Endothelial cell of umbilical vein (primary cell): ENCODE measurements at regions of chr4 and their contacts with region 1.

Region 1: GRCh38 chr4:7802093-7802726 is 137.5 kb downstream of the AFAP1 start:
- DNase-seq: peak; percentile 86
- H3K4me3 ChIP-seq: no peak overlapping the region
- H3K27ac ChIP-seq: no peak overlapping the region
- H3K4me1 ChIP-seq: peaks cover 42% of the 10 kb centered on the region
- H3K27me3 ChIP-seq: no peaks in the 10 kb centered on the region
- CTCF ChIP-seq: peak; percentile 86 to 91
- POLR2A ChIP-seq: no peak

Region 2: GRCh38 chr4:7192252-7193029 is 609.8 kb before region 1 on chr4 and contains the start of gene SORCS2:
- CTCF ChIA-PET with region 1: interaction called, 4 read pairs
- POLR2A ChIA-PET with region 1: no interaction called
- dilution Hi-C with region 1: no loop called
- intact Hi-C with region 1: loop called (anchors 5 kb)
- DNase-seq: peak; percentile 25
- H3K4me3 ChIP-seq: no peak within 1 kb of the TSS
- H3K27ac ChIP-seq: no peak within 1 kb of the TSS
- H3K4me1 ChIP-seq: no peaks in the 10 kb centered on the region
- H3K27me3 ChIP-seq: peaks cover 42 to 46% of the 10 kb centered on the region in 2 experiments
- CTCF ChIP-seq: peak; percentile 58 to 59
- POLR2A ChIP-seq: no peak
- total RNA-seq, gene SORCS2: 0.14 TPM in 1 of 2 replicates, not detected in the other

Region 3: GRCh38 chr4:7679406-7680040 is 122.7 kb before region 1 on chr4:
- CTCF ChIA-PET with region 1: no interaction called
- POLR2A ChIA-PET with region 1: no interaction called
- dilution Hi-C with region 1: no loop called
- intact Hi-C with region 1: no loop called
- DNase-seq: no peak
- H3K4me3 ChIP-seq: no peak overlapping the region
- H3K27ac ChIP-seq: no peak overlapping the region
- H3K4me1 ChIP-seq: no peaks in the 10 kb centered on the region
- H3K27me3 ChIP-seq: no peaks in the 10 kb centered on the region
- CTCF ChIP-seq: no peak
- POLR2A ChIP-seq: no peak

Region 4: GRCh38 chr4:7770224-7771050 is 31.8 kb before region 1 on chr4:
- CTCF ChIA-PET with region 1: interaction called, 36 read pairs
- POLR2A ChIA-PET with region 1: no interaction called
- dilution Hi-C with region 1: no loop called
- intact Hi-C with region 1: loop called (anchors 1 kb)
- DNase-seq: peak; percentile 14
- H3K4me3 ChIP-seq: no peak overlapping the region
- H3K27ac ChIP-seq: no peak overlapping the region
- H3K4me1 ChIP-seq: no peaks in the 10 kb centered on the region
- H3K27me3 ChIP-seq: no peaks in the 10 kb centered on the region
- CTCF ChIP-seq: peak; percentile 47 to 61
- POLR2A ChIP-seq: no peak

Region 5: DNA sequence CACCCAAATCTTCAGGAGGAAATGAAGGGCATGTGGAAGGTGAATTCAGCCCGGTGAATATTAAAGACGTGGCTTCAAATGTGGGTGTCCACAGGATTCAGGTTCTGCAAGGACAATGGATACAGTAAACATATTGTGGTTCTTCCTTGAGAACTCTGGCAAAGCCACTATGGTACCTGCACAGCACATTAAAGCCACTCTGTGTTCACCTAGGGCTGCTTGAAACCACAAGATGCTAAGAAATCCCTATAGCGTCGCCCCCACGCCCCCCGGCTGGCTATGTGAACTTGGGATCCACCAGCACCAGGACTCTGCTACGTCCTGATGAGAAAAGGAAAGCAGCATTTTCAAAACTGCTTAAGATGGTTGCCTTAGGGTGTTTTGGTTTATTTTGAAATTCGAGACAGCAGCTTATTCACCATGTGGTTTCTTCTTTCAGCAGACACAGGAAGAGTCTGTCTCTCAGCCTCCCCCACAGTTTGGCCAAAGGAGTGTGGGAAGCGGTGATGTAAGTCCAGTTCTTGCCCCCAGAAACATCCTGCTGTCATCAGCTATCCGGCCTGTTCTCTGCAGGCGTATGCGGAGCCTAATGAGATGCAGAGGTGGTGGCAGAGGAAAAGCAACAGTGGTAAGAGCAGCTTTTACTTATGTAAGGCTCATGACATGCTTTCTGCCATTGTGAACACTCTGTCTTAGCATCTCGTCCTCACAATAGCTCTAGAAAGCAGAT is 25.9 kb after region 1 on chr4:
- CTCF ChIA-PET with region 1: interaction called, 23 read pairs
- POLR2A ChIA-PET with region 1: interaction called, 7 read pairs
- dilution Hi-C with region 1: no loop called
- intact Hi-C with region 1: loop called (anchors 1 kb)
- DNase-seq: peak; percentile 96
- H3K4me3 ChIP-seq: no peak overlapping the region
- H3K27ac ChIP-seq: peak overlapping the region; percentile 88
- H3K4me1 ChIP-seq: peaks cover 74% of the 10 kb centered on the region
- H3K27me3 ChIP-seq: no peaks in the 10 kb centered on the region
- CTCF ChIP-seq: no peak
- POLR2A ChIP-seq: no peak

Region 6: DNA sequence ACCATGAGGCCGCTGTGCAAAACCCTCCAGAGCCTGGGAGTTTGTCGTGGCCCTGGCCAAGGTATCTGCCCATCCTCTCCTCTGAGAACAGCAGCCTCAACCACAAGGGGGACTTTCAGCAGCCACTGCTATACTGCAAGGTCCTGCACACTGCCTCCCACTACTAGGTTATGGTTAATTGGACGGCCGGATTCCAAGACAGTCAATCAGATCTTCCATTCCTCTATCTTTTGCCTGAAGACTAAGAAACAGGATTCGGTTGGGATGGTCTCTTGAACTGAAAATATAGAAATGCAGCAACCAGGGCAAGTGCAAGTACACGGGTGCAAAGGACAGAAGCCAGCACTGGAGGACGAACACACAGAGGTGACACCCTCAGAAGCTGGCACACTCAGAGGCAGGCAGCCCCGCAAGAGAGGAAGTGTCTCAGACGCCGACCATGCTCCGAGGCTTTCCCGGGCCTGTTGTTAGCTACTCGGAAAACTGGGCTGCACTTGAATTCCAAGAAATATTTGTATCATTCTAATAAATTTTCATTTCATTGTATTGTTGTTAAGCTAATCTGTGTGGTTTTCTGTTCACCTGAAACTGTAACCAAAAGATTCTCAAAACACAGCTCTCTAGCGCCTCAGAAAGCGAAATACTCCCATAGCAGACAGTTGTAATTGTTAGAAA is 74.1 kb after region 1 on chr4:
- CTCF ChIA-PET with region 1: interaction called, 13 read pairs
- POLR2A ChIA-PET with region 1: no interaction called
- dilution Hi-C with region 1: no loop called
- intact Hi-C with region 1: no loop called
- DNase-seq: peak; percentile 75
- H3K4me3 ChIP-seq: no peak overlapping the region
- H3K27ac ChIP-seq: peak overlapping the region; percentile 30
- H3K4me1 ChIP-seq: peaks cover 55% of the 10 kb centered on the region
- H3K27me3 ChIP-seq: no peaks in the 10 kb centered on the region
- CTCF ChIP-seq: peak; percentile 44 to 57
- POLR2A ChIP-seq: peak; percentile 34

Region 7: GRCh38 chr4:7939377-7940108 is 137.3 kb after region 1 on chr4 and contains the start of gene AFAP1:
- CTCF ChIA-PET with region 1: interaction called, 55 read pairs
- POLR2A ChIA-PET with region 1: interaction called, 8 read pairs
- dilution Hi-C with region 1: no loop called
- intact Hi-C with region 1: loop called (anchors 1 kb)
- DNase-seq: peak; percentile 93
- H3K4me3 ChIP-seq: peak within 1 kb of the TSS; percentile 47 to 93 (median 88)
- H3K27ac ChIP-seq: peak within 1 kb of the TSS; percentile 80
- H3K4me1 ChIP-seq: peaks cover 31% of the 10 kb centered on the region
- H3K27me3 ChIP-seq: no peaks in the 10 kb centered on the region
- CTCF ChIP-seq: no peak
- POLR2A ChIP-seq: peak; percentile 93
- total RNA-seq, gene AFAP1: 93.3 and 103 TPM in 2 replicates